ENCODE measurements at regions of chr13 and their contacts with region 1.

Region 1: DNA sequence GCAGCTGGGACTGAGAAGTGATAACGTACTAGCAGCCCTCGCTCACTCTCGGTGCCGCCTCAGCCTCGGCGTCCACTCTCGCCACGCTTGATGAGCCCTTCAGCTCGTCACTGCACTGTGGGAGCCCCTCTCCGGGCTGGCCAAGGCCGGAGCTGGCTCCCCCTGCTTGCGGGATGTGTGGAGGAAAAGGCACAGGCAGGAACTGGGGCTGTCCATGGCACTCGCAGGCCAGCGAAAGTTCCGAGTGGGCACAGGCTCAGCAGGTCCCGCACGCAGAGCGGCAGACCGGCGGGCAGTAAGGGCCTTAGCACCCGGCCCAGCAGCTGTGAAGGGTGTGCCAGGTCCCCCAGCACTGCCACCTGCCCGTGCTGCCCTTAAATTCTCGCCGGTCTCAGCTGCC is 38.8 kb upstream of the SGCG start:
- DNase-seq: no peak
- ATAC-seq: no peak
- H3K4me3 ChIP-seq: no peak overlapping the region
- H3K27ac ChIP-seq: no peak overlapping the region
- H3K4me1 ChIP-seq: no peaks in the 10 kb centered on the region
- H3K27me3 ChIP-seq: peaks cover 7% of the 10 kb centered on the region
- CTCF ChIP-seq: no peak

Region 2: DNA sequence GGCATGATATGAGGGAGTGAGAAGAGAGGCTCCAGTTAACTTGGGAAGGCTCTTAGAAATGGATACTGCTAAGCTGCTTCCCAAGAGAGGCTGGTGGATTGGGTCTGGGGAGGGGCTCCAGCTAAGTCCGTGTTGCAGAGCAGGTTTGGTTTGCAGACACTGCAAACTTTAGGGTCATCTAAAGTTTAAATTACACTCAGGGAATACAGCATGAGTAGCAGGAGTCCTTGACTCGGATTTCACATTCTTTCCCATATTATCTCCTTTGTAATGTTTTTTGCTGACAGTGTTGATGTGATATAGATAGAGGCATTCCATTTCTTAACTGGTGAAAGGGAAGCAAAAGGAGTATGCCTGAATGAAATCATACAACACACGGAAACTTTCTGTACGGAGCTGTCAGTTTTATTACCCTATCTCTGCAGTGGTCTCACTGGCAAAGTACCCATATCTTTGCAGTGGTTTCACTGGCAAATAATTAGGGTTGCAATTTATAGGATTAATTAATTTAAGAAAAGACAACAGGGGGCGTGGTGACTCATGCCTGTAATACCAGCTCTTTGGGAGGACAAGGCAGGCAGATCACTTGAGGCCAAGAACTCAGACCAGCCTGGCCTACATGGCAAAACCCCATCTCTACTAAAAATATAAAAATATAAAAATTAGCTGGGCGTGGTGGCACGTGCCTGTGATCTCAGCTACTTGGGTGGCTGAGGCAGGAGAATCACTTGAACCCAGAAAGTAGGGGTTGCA is 70.9 kb after region 1 on chr13:
- CTCF ChIA-PET with region 1: no interaction called
- POLR2A ChIA-PET with region 1: interaction called, 11 read pairs
- intact Hi-C with region 1: no loop called
- DNase-seq: no peak
- ATAC-seq: no peak
- H3K4me3 ChIP-seq: no peak overlapping the region
- H3K27ac ChIP-seq: no peak overlapping the region
- H3K4me1 ChIP-seq: no peaks in the 10 kb centered on the region
- H3K27me3 ChIP-seq: peaks cover 9% of the 10 kb centered on the region; the same call in 1 of the 2 replicates
- CTCF ChIP-seq: no peak

Region 3: GRCh38 chr13:23339225-23339624 is 197.3 kb after region 1 on chr13:
- CTCF ChIA-PET with region 1: no interaction called
- POLR2A ChIA-PET with region 1: no interaction called
- intact Hi-C with region 1: no loop called
- DNase-seq: no peak
- ATAC-seq: no peak
- H3K4me3 ChIP-seq: no peak overlapping the region
- H3K27ac ChIP-seq: no peak overlapping the region
- H3K4me1 ChIP-seq: no peaks in the 10 kb centered on the region
- H3K27me3 ChIP-seq: no peaks in the 10 kb centered on the region
- CTCF ChIP-seq: no peak

Region 4: DNA sequence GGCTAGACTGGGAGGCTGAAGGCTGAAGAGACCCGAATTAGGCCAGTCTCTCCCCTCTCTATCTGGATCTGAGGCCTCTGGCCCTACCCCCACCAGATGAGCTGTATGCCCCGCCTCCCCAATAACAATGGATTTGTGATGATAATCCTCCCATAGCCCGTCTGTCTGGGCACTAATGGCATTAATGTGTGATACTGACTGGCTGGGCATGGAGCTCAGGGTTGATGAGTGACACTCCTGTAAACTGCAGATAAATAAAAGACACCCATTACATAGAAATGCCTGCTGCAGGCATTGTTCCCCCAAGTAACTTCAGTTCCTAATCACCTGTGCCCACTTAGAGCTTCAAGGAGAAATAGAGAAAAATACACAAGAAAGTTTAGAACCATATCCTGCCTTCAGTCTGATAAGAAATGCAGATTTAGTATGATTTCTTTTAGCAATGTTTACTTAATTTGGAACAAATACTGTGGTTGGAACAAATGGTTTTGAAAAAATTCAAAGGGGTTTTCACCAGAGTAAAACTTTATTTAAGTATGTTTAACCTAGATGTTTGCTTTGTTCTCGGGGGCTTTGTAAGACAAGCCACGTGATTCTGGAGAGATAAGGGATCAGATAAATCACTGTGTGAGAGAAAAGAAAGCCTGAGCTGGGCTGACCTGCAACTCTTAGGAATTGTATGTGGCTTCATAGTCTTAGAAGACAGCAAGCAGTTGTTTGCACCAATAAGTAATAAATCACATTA is 488.6 kb after region 1 on chr13:
- CTCF ChIA-PET with region 1: no interaction called
- POLR2A ChIA-PET with region 1: no interaction called
- intact Hi-C with region 1: no loop called
- DNase-seq: no peak
- ATAC-seq: no peak
- H3K4me3 ChIP-seq: no peak overlapping the region
- H3K27ac ChIP-seq: no peak overlapping the region
- H3K4me1 ChIP-seq: peaks cover 9% of the 10 kb centered on the region; the same call in 1 of the 2 replicates
- H3K27me3 ChIP-seq: no peaks in the 10 kb centered on the region
- CTCF ChIP-seq: no peak